ENCODE measurements at regions of chr2 and their contacts with region 1.

Region 1: DNA sequence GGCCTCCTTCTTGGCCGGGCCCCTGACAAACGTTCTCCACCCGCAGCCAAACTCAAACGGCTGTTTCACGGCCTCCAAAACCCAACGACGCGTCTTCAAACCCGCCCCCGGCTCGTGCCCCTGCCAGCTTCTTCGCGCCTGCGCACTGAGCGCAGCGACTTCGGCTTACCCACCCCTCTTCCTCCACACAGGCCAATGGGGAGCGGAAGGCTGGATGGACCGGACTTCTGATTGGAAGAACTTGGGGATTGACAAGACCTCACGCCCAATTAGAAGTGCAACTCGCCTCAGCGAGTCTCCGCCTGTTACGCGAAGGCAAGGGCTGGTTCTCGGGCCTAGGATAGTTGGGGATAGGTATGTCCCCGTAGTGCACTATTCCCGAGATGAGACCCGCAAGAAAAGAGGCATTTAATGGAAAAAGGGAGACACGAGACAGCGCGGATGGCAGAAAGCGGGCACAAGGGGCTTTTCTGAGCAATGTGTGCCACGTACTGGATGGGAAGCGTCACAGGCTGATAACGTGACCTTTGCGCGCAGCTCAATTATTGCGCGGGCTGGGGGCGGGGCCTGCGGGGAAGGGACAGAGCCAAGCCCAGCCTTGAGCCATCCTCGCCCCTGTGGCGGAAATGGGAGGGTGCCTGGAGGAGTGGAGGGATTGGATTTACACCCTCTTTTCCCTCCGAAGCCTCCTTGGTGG is at the start of gene LAPTM4A:
- DNase-seq: peak; percentile 98
- ATAC-seq: peak; percentile 96
- H3K4me3 Mint-ChIP-seq: no peak within 1 kb of the TSS
- H3K27ac Mint-ChIP-seq: no peak within 1 kb of the TSS
- H3K4me1 Mint-ChIP-seq: peaks cover 26% of the 10 kb centered on the region
- H3K27me3 Mint-ChIP-seq: peaks cover 16% of the 10 kb centered on the region
- CTCF ChIP-seq: no peak
- total RNA-seq, gene LAPTM4A: 15.6 to 16.1 TPM

Region 2: GRCh38 chr2:19801367-19802080 is 250.2 kb before region 1 on chr2:
- CTCF ChIA-PET with region 1: no interaction called
- POLR2A ChIA-PET with region 1: no interaction called
- intact Hi-C with region 1: no loop called
- DNase-seq: no peak
- ATAC-seq: no peak
- H3K4me3 Mint-ChIP-seq: no peak overlapping the region
- H3K27ac Mint-ChIP-seq: no peak overlapping the region
- H3K4me1 Mint-ChIP-seq: no peaks in the 10 kb centered on the region
- H3K27me3 Mint-ChIP-seq: no peaks in the 10 kb centered on the region
- CTCF ChIP-seq: no peak

Region 3: GRCh38 chr2:19901442-19902215 is 150.1 kb before region 1 on chr2 and contains the start of gene TTC32:
- CTCF ChIA-PET with region 1: no interaction called
- POLR2A ChIA-PET with region 1: no interaction called
- intact Hi-C with region 1: loop called (anchors 5 kb)
- DNase-seq: peak; percentile 97
- ATAC-seq: peak; percentile 88
- H3K4me3 Mint-ChIP-seq: peak within 1 kb of the TSS; percentile 81
- H3K27ac Mint-ChIP-seq: peak within 1 kb of the TSS; percentile 97
- H3K4me1 Mint-ChIP-seq: peaks cover 44% of the 10 kb centered on the region
- H3K27me3 Mint-ChIP-seq: no peaks in the 10 kb centered on the region
- CTCF ChIP-seq: no peak
- total RNA-seq, gene TTC32: 21.6 to 24.2 TPM